OCI-LY7 (cell line): ENCODE measurements at regions of chr17 and their contacts with region 1.

Region 1: GRCh38 chr17:34386697-34387550 is 23.9 kb upstream of the CCL1 start:
- DNase-seq: peak; percentile 57
- H3K4me3 ChIP-seq: peak overlapping the region; percentile 8
- H3K27ac ChIP-seq: peak overlapping the region; percentile 58
- H3K4me1 ChIP-seq: peaks cover 81% of the 10 kb centered on the region
- CTCF ChIP-seq: no peak

Region 2: GRCh38 chr17:34337701-34338100 is 49.2 kb before region 1 on chr17:
- CTCF ChIA-PET with region 1: no interaction called
- POLR2A ChIA-PET with region 1: no interaction called
- intact Hi-C with region 1: no loop called
- DNase-seq: no peak
- H3K4me3 ChIP-seq: no peak overlapping the region
- H3K27ac ChIP-seq: no peak overlapping the region
- H3K4me1 ChIP-seq: no peaks in the 10 kb centered on the region
- CTCF ChIP-seq: no peak

Region 3: GRCh38 chr17:34398990-34399389 is 12.1 kb after region 1 on chr17:
- CTCF ChIA-PET with region 1: interaction called, 7 read pairs
- POLR2A ChIA-PET with region 1: interaction called, 10 read pairs
- intact Hi-C with region 1: no loop called
- DNase-seq: peak; percentile 67
- H3K4me3 ChIP-seq: peak overlapping the region; percentile 5
- H3K27ac ChIP-seq: peak overlapping the region; percentile 54
- H3K4me1 ChIP-seq: peaks cover 55% of the 10 kb centered on the region
- CTCF ChIP-seq: no peak